PC-3 (cell line): ENCODE measurements at regions of chr7 and their contacts with region 1.

Region 1: GRCh38 chr7:108094933-108095710 is 35.0 kb downstream of the LAMB4 start:
- DNase-seq: peak; percentile 80
- ATAC-seq: peak; percentile 96
- H3K4me3 ChIP-seq: peak overlapping the region; percentile 28; the same call in 1 of the 2 replicates
- H3K27ac ChIP-seq: peak overlapping the region; percentile 7; the same call in 1 of the 2 replicates
- H3K4me1 ChIP-seq: peaks cover 27% of the 10 kb centered on the region
- H3K27me3 ChIP-seq: no peaks in the 10 kb centered on the region
- CTCF ChIP-seq: no peak

Region 2: GRCh38 chr7:107728281-107728680 is 366.8 kb before region 1 on chr7:
- CTCF ChIA-PET with region 1: no interaction called
- POLR2A ChIA-PET with region 1: no interaction called
- intact Hi-C with region 1: no loop called
- DNase-seq: no peak
- ATAC-seq: no peak
- H3K4me3 ChIP-seq: no peak overlapping the region
- H3K27ac ChIP-seq: no peak overlapping the region
- H3K4me1 ChIP-seq: no peaks in the 10 kb centered on the region
- H3K27me3 ChIP-seq: no peaks in the 10 kb centered on the region
- CTCF ChIP-seq: no peak

Region 3: GRCh38 chr7:107890962-107891635 is 204.0 kb before region 1 on chr7 and contains the start of gene DLD:
- CTCF ChIA-PET with region 1: no interaction called
- POLR2A ChIA-PET with region 1: no interaction called
- intact Hi-C with region 1: loop called (anchors 10 kb)
- DNase-seq: peak; percentile 93
- ATAC-seq: peak; percentile 96
- H3K4me3 ChIP-seq: peak within 1 kb of the TSS; percentile 81
- H3K27ac ChIP-seq: peak within 1 kb of the TSS; percentile 71
- H3K4me1 ChIP-seq: peaks cover 31% of the 10 kb centered on the region
- H3K27me3 ChIP-seq: no peaks in the 10 kb centered on the region
- CTCF ChIP-seq: no peak
- total RNA-seq, gene DLD: 53.6 and 64.0 TPM in 2 replicates

Region 4: DNA sequence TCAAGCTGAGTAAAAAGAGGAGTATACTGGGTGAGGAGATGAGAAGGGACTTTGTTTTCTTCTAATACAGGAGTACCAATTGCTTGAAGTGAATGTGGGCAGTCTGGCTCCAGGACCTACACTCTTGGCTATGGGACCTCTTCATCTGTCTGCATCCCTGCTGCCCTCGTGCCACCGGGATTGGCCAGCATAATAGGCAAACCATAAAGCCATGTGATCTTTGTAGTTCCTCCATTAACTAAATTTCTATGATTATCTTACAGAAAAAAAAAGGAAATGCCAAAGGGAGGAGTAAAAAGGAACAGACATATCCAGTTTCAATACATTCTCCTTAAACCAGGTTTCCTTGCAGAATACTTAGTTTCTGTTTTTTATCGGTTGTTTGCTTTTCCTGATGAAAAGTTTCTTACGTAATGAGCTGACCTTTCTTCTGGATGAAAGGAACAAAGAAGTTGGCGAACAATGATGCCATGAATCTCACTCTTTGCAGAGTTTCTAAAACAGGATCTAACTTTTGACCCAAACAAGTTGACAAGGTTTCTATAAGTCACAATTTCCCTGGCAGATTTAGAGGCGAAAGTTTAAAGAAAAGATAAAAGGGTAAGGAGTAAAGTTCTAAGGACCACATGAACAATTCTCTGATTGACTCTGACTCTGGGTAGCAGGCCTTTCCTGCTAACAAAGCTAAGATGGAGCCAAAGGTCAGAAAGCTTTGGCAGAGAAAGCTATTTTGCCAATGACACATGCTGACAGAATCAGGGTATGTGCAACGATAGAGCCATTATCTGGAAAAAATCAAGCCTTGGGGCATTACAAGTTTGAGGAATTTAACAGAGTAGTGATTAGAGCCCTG is 146.3 kb before region 1 on chr7:
- CTCF ChIA-PET with region 1: interaction called, 3 read pairs
- POLR2A ChIA-PET with region 1: no interaction called
- intact Hi-C with region 1: loop called (anchors 5 kb)
- DNase-seq: peak; percentile 97
- ATAC-seq: peak; percentile 72
- H3K4me3 ChIP-seq: peak overlapping the region; percentile 17; the same call in 1 of the 2 replicates
- H3K27ac ChIP-seq: peak overlapping the region; percentile 95
- H3K4me1 ChIP-seq: peaks cover 61% of the 10 kb centered on the region
- H3K27me3 ChIP-seq: no peaks in the 10 kb centered on the region
- CTCF ChIP-seq: no peak

Region 5: DNA sequence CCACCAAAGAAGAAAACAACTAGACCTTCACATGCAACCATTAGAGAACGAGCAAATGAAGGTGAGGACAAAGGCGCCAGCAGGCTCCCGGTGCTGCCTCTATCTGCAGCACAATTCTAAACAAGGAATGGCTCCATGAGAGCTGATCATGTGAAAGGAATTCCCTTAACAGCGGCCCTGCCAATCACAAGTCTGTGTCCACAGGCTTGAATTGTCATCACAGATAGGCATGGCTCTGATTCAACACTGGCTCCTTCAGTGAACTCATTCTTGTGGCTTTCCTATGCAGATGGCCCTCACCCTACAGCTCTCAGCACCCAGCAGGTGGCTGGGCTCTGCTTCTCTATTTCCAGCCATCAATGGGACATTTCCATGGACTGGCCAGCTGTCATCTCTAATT is 128.4 kb before region 1 on chr7:
- CTCF ChIA-PET with region 1: no interaction called
- POLR2A ChIA-PET with region 1: no interaction called
- intact Hi-C with region 1: loop called (anchors 1 kb)
- DNase-seq: peak; percentile 89
- ATAC-seq: peak; percentile 87
- H3K4me3 ChIP-seq: no peak overlapping the region
- H3K27ac ChIP-seq: peak overlapping the region; percentile 61
- H3K4me1 ChIP-seq: peaks cover 26% of the 10 kb centered on the region
- H3K27me3 ChIP-seq: no peaks in the 10 kb centered on the region
- CTCF ChIP-seq: no peak

Region 6: DNA sequence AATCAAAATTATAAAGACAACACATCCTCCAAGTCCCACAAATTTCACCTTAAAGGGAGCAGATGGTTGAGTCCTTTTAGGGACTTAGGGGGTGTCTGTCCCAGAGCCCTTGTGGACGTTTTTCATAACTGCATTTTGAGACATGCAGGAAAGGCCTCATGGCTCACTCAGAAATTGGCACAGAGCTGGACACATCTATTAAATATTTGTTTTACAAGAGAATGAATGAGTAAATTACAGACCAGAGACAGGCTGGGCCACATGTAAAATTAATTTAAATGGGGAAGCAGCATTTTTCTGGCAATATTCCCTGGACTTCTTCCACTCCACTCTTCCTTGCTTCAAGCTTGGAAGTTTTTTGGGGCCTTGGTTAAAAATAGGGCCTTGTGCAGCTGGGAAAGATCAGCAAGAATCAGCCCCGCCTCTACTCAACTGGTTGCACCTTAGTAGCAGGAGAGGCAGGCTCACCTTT is 112.2 kb before region 1 on chr7:
- CTCF ChIA-PET with region 1: interaction called, 4 read pairs
- POLR2A ChIA-PET with region 1: no interaction called
- intact Hi-C with region 1: loop called (anchors 5 kb)
- DNase-seq: peak; percentile 52
- ATAC-seq: peak; percentile 94
- H3K4me3 ChIP-seq: no peak overlapping the region
- H3K27ac ChIP-seq: peak overlapping the region; percentile 15; the same call in 1 of the 2 replicates
- H3K4me1 ChIP-seq: peaks cover 5% of the 10 kb centered on the region; the same call in 1 of the 2 replicates
- H3K27me3 ChIP-seq: no peaks in the 10 kb centered on the region
- CTCF ChIP-seq: peak; percentile 41; the same call in 1 of the 2 replicates

Region 7: DNA sequence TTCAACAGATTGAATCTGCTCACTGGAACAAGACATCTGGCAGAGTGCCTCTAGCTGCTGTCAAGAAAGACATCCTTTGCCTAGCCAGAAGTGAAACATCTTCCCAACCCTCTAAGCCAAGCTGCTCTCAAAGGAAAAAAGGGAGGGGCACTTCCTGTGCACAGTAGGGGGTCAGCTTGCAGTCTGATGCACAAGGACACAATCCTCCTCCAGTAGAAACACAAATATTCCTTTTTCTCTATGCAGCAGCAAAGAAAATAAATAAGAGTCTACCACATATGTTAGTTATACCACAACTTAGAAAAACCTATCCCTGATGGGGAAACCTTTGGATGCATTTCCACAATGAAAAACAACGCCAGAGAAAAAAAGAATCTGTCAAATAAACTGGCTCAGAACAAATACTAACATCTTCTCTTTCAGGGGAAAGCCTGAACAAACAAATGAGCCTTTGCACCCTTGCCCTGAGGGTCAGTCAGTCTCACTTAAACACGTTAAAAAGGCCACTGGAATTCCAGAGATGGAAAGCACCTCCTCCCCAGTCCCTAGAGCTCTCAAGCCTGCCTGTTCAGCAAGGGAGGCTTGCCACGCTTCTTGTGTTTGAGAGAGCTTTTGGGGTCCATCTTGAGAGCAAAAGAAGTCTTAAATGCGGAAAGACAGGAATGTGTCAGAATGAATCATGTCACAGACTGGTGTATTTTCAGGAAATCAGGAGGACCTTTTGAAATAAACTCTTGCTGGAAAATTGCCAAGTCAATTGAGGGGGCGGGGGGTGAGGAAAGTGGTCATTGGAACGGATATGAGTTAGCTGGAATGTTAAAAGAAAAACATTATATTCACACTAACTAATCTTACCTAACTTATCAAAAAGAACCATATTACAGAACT is 99.7 kb before region 1 on chr7:
- CTCF ChIA-PET with region 1: no interaction called
- POLR2A ChIA-PET with region 1: no interaction called
- intact Hi-C with region 1: loop called (anchors 1 kb)
- DNase-seq: peak; percentile 91
- ATAC-seq: peak; percentile 68
- H3K4me3 ChIP-seq: peak overlapping the region; percentile 22; the same call in 1 of the 2 replicates
- H3K27ac ChIP-seq: peak overlapping the region; percentile 88
- H3K4me1 ChIP-seq: peaks cover 65% of the 10 kb centered on the region
- H3K27me3 ChIP-seq: no peaks in the 10 kb centered on the region
- CTCF ChIP-seq: no peak

Region 8: GRCh38 chr7:108028076-108028475 is 67.0 kb before region 1 on chr7:
- CTCF ChIA-PET with region 1: no interaction called
- POLR2A ChIA-PET with region 1: no interaction called
- intact Hi-C with region 1: loop called (anchors 2 kb)
- DNase-seq: peak; percentile 68
- ATAC-seq: peak; percentile 96
- H3K4me3 ChIP-seq: no peak overlapping the region
- H3K27ac ChIP-seq: no peak overlapping the region
- H3K4me1 ChIP-seq: peaks cover 15% of the 10 kb centered on the region
- H3K27me3 ChIP-seq: no peaks in the 10 kb centered on the region
- CTCF ChIP-seq: no peak